MCF 10A (cell line): ENCODE measurements at regions of chr17 and their contacts with region 1.

Region 1: GRCh38 chr17:42843358-42843934 is 934 bp upstream of the AOC2 start:
- DNase-seq: peak; percentile 69
- H3K4me3 Mint-ChIP-seq: no peak overlapping the region
- H3K27ac Mint-ChIP-seq: no peak overlapping the region
- H3K4me1 Mint-ChIP-seq: peaks cover 13% of the 10 kb centered on the region
- H3K27me3 Mint-ChIP-seq: no peaks in the 10 kb centered on the region
- CTCF ChIP-seq: peak; percentile 61

Region 2: DNA sequence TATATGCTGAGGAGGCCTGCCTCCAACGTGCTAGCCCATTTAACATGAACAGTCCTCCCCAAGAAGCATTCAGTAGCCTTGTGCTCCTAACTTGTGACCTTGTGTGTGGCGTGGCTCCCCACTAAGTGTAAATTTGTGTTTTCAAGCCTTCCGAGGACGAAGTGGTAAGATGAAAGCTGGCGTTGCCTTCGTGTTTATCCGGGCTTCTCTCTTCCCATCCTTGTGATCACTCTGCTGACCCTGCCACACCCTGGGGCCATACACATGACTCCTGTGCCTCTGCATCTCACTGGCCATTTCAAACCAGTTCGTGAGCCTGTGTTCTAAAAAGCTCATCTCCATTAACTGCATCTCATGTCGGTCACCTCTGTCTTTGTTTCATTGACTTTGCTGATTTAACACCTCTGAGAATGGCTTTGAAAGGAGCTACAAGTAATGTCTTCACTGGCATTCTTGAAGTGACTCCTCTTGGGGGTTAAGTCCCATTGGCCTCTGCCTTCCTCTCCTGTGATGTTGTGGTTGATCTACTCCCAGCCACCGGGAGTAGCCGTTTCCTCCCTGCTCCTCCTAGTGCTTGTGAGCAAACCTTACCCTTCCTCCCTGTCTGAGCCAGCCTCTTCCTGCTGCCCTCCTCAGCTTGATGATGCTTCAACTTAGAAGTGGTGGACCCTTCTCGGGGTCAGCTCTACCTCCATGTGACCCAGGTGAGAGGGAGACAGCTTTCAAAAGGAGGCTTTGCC is 334.9 kb before region 1 on chr17:
- CTCF ChIA-PET with region 1: no interaction called
- POLR2A ChIA-PET with region 1: no interaction called
- intact Hi-C with region 1: no loop called
- DNase-seq: no peak
- H3K4me3 Mint-ChIP-seq: no peak overlapping the region
- H3K27ac Mint-ChIP-seq: no peak overlapping the region
- H3K4me1 Mint-ChIP-seq: no peaks in the 10 kb centered on the region
- H3K27me3 Mint-ChIP-seq: no peaks in the 10 kb centered on the region
- CTCF ChIP-seq: no peak

Region 3: DNA sequence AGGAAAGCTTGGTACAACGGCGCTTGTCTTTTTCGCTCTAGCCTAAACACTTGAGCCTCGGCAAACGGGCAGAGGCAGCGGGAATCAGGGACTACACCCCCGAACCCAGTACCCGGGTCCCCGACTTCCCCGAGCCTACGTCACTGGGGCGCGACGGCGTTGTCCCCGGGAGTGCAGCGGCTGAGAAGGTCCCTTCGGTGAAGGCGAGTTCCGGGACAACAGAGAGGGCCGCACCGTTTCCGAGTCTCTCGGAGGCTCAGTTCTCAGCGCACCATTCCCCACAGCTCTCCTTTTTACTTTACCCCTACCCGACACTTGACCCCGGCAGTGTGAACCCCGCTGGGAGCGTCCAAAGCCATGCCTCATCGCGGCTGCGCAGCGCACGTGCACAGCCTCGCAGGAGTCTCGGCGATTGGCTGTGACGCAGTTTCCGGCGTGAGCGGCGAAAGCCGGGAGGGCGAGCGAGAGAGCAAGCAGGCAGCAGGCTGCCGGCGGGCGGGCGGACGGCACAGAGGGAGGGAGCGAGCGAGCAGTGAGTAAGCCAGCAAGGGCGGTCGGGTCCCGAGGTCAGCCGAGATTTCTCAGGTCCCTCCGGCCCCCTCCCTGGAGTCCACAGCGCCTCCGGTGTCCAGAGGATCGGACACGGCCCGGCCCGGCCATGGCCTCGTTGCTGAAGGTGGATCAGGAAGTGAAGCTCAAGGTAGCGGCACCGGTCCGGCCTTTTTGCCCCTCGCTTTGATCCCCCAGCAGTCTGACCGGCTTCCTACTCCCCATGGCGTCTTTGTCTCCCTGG is 10.3 kb before region 1 on chr17 and contains the start of gene PSME3:
- CTCF ChIA-PET with region 1: interaction called, 4 read pairs
- POLR2A ChIA-PET with region 1: interaction called, 15 read pairs
- intact Hi-C with region 1: no loop called
- DNase-seq: peak; percentile 87
- H3K4me3 Mint-ChIP-seq: peak within 1 kb of the TSS; percentile 96
- H3K27ac Mint-ChIP-seq: peak within 1 kb of the TSS; percentile 99
- H3K4me1 Mint-ChIP-seq: peaks cover 25% of the 10 kb centered on the region
- H3K27me3 Mint-ChIP-seq: no peaks in the 10 kb centered on the region
- CTCF ChIP-seq: no peak
- total RNA-seq, gene PSME3: 220 and 232 TPM in 2 replicates

Region 4: DNA sequence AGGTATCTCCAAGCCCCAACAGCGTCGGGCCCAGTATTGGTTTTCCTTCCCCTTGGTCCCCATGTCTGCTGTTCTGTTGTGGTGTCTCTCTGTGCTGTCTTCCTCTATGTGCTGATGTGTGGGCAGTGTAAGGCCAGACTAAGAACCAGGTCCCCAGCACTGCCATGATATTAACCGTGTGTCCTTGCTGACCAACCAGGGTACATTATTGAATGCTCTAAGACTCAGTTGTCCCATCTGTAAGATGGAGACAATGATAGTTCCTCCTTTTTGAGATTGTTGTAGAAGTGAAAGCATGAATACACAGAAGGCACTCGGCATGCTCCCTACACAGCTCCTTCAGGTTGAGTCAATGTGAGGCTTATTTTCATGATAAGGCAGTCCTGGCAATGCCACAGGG is 28.2 kb after region 1 on chr17:
- CTCF ChIA-PET with region 1: no interaction called
- POLR2A ChIA-PET with region 1: no interaction called
- intact Hi-C with region 1: no loop called
- DNase-seq: no peak
- H3K4me3 Mint-ChIP-seq: no peak overlapping the region
- H3K27ac Mint-ChIP-seq: no peak overlapping the region
- H3K4me1 Mint-ChIP-seq: no peaks in the 10 kb centered on the region
- H3K27me3 Mint-ChIP-seq: peaks cover 12% of the 10 kb centered on the region
- CTCF ChIP-seq: no peak

Region 5: DNA sequence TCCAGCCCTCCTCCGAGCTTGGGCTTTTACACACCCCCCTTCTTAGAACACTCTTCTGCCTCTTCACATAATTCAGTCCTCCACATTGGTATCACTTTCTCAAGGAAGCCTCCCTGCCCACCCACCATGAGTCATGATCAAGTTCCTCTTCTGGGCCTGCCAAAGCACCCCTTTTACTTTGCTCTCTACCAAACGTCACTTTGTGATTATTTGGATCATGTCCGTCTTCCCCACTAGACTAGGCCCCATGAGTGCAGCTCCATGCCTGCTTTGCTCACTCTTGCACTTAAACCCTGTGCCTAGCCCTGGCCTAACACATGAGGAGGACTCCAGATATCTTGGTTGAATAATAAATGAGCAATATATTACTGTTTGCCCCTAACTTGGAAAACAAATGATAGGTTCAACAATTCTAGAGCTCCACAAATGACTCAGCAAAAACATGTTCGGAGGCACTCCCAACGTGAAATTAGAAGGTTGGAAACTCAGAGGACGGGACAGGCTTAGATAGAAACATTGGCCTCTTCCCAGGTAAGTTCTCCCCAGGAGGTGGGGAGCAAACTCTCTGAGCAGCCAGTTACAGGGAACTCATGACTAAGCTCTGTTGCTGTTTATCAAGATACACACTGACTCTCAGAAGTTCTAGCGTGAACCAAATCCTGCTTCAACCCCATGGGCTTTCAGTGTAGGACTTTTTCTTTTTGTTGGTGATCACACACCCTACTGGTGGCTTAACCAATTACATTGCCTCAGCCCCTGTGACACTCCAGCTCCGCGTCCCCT is 85.5 kb after region 1 on chr17:
- CTCF ChIA-PET with region 1: interaction called, 25 read pairs
- POLR2A ChIA-PET with region 1: interaction called, 6 read pairs
- intact Hi-C with region 1: loop called (anchors 2 kb)
- DNase-seq: peak; percentile 84
- H3K4me3 Mint-ChIP-seq: no peak overlapping the region
- H3K27ac Mint-ChIP-seq: peak overlapping the region; percentile 77
- H3K4me1 Mint-ChIP-seq: no peaks in the 10 kb centered on the region
- H3K27me3 Mint-ChIP-seq: peaks cover 5% of the 10 kb centered on the region
- CTCF ChIP-seq: peak; percentile 55

Region 6: GRCh38 chr17:42937712-42938596 is 94.5 kb after region 1 on chr17:
- CTCF ChIA-PET with region 1: interaction called, 60 read pairs
- POLR2A ChIA-PET with region 1: interaction called, 8 read pairs
- intact Hi-C with region 1: loop called (anchors 1 kb)
- DNase-seq: peak; percentile 60
- H3K4me3 Mint-ChIP-seq: no peak overlapping the region
- H3K27ac Mint-ChIP-seq: no peak overlapping the region
- H3K4me1 Mint-ChIP-seq: no peaks in the 10 kb centered on the region
- H3K27me3 Mint-ChIP-seq: peaks cover 12% of the 10 kb centered on the region
- CTCF ChIP-seq: peak; percentile 49